ENCODE measurements at regions of chr1 and their contacts with region 1.

Region 1: DNA sequence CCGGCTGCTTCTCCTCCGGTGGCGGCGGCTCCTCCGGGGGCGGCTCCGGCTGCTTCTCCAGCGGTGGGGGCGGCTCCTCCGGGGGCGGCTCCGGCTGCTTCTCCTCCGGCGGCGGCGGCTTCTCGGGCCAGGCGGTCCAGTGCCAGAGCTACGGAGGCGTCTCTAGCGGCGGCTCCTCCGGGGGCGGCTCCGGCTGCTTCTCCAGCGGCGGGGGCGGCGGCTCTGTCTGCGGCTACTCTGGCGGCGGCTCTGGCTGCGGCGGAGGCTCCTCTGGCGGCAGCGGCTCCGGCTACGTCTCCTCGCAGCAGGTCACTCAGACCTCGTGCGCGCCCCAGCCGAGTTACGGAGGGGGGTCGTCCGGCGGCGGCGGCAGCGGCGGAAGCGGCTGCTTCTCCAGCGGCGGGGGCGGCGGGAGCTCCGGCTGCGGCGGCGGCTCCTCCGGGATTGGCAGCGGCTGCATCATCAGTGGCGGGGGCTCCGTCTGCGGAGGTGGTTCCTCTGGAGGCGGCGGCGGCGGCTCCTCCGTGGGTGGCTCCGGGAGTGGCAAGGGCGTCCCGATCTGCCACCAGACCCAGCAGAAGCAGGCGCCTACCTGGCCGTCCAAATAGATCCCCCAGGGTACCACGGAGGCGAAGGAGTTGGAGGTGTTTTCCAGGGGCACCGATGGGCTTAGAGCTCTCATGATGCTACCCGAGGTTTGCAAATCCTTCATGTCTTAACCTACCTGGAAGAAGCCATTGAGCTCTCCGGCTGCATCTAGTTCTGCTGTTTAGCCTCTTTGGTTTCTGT is 2.0 kb downstream of the LORICRIN start:
- DNase-seq: no peak

Region 2: GRCh38 chr1:151254217-151255213 is 2007.0 kb before region 1 on chr1 and contains the start of gene PSMD4:
- in situ Hi-C with region 1: loop called (anchors 25 kb)
- DNase-seq: peak; percentile 99
- total RNA-seq, gene PSMD4: 370 and 398 TPM in 2 replicates

Region 3: DNA sequence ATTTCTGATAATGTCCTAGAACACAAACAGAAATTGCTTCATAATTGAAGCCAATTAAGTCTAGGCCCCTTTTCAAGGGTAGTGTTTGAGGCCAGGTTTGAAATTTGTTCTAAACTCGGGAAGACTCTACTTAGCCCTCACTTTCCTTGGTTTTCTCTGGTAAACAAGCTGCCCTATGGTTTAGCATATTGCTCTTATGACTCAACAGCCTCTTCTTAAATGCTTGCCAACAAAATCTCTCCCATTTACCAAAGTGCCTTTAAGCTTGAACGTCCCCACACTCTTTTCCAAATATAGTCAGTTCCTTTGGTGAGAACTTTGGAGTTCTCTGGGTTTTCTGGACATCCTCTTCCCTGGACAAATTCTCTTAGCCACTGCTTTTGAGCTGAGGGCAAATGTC is 424.6 kb before region 1 on chr1:
- in situ Hi-C with region 1: no loop called
- DNase-seq: no peak

Region 4: GRCh38 chr1:153568367-153569099 is 307.1 kb after region 1 on chr1:
- in situ Hi-C with region 1: no loop called
- DNase-seq: peak; percentile 91